ENCODE measurements at regions of chr15 and their contacts with region 1.

Region 1: DNA sequence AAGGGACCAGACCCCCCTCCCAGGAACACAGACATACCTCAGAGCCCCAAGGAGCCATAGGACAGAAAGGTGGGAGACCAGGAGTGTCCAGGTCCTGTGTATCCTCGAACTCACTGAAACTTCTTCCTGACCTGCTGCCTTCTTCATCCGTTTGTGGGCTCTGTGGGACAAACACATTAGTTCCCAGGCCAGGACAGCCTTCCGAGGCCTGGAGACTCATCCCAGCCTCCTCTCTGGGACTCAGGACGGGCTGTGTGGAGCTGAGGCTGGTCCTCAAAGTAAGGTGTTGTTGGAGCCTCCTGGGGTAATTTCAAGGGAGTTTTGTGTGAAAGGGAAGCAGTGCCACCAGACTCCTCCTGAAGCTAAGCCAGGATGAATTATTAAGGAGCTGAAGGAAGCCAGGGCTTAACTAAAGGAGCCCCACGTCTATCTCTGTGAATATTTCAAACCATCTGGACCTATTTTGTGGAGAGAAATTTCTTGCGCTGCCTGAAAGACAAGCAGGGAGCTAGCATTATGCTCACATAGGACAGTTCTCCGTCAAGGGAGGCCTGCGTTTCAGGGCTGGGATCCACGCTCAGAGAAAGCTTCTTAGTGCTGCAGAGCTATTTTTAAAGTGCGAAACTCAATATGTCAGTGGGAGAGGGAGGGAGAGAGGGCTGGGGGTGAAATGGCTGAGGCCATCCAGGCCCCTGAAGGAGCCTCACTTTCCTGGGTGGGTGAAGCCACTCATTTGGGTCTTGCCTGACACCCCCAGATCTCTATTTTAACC is 29.8 kb upstream of the PLA2G4E start:
- DNase-seq: no peak
- H3K4me3 ChIP-seq: no peak overlapping the region
- H3K27ac ChIP-seq: peak overlapping the region; percentile 82
- H3K4me1 ChIP-seq: peaks cover 34% of the 10 kb centered on the region
- H3K27me3 ChIP-seq: no peaks in the 10 kb centered on the region
- CTCF ChIP-seq: no peak

Region 2: GRCh38 chr15:41989934-41990605 is 60.6 kb before region 1 on chr15:
- intact Hi-C with region 1: loop called (anchors 5 kb)
- DNase-seq: no peak
- H3K4me3 ChIP-seq: no peak overlapping the region
- H3K27ac ChIP-seq: no peak overlapping the region
- H3K4me1 ChIP-seq: peaks cover 6% of the 10 kb centered on the region
- H3K27me3 ChIP-seq: no peaks in the 10 kb centered on the region
- CTCF ChIP-seq: no peak